Activated CD4-positive, alpha-beta memory T cell treated with anti-CD3 and anti-CD28 coated beads for 36 hours (primary cell): ENCODE measurements at regions of chr11 and their contacts with region 1.

Region 1: GRCh38 chr11:19076744-19077589 is 16.4 kb upstream of the MRGPRX2 start:
- DNase-seq: peak; percentile 78
- H3K4me3 Mint-ChIP-seq: no peak overlapping the region
- H3K27ac Mint-ChIP-seq: no peak overlapping the region
- H3K4me1 Mint-ChIP-seq: no peaks in the 10 kb centered on the region
- H3K27me3 Mint-ChIP-seq: peaks cover 5% of the 10 kb centered on the region

Region 2: GRCh38 chr11:18798799-18799469 is 278.0 kb before region 1 on chr11:
- CTCF ChIA-PET with region 1: no interaction called
- POLR2A ChIA-PET with region 1: no interaction called
- intact Hi-C with region 1: no loop called
- DNase-seq: no peak
- H3K4me3 Mint-ChIP-seq: no peak overlapping the region
- H3K27ac Mint-ChIP-seq: no peak overlapping the region
- H3K4me1 Mint-ChIP-seq: no peaks in the 10 kb centered on the region
- H3K27me3 Mint-ChIP-seq: peaks cover 9% of the 10 kb centered on the region

Region 3: DNA sequence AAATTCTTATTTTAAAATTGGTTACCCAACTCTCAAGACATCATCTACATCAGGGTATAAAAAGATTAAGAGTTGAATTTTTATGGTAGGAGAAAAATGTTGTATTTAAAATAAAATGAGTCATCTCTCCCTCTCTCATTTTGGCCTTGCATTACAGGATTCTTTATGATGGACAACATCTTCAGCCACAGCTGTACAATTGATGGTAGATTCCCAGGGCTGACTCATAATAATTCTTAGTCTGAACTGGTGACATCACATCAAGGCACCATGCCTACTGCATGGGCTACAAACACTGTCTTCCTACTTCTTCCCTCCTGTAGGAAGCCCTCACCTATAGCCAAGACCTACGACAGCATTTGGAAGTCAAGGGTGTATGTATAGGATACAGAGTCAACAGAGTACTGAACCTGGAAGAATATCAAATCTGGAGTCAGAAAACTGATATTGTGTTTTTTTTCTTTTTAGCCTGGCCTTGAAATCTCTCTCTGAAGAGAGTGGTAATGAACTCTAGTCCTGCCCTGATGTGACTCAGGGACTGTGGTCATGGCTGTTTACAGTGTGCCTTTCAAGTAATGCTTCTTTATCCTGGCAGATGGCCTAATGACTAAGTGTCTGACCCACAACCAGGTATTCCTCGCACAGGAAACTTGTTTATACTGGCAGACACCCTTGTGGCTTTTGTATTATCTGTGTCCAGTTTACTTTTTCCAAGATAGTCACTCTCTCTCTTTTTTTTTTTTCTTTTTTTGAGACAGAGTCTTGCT is 49.0 kb before region 1 on chr11:
- CTCF ChIA-PET with region 1: no interaction called
- POLR2A ChIA-PET with region 1: no interaction called
- intact Hi-C with region 1: no loop called
- DNase-seq: no peak
- H3K4me3 Mint-ChIP-seq: no peak overlapping the region
- H3K27ac Mint-ChIP-seq: no peak overlapping the region
- H3K4me1 Mint-ChIP-seq: peaks cover 2% of the 10 kb centered on the region
- H3K27me3 Mint-ChIP-seq: peaks cover 32% of the 10 kb centered on the region

Region 4: GRCh38 chr11:19060629-19061028 is 16.3 kb before region 1 on chr11 and contains the start of gene MRGPRX2:
- CTCF ChIA-PET with region 1: interaction called, 32 read pairs
- POLR2A ChIA-PET with region 1: interaction called, 3 read pairs
- intact Hi-C with region 1: no loop called
- DNase-seq: peak; percentile 61
- H3K4me3 Mint-ChIP-seq: no peak within 1 kb of the TSS
- H3K27ac Mint-ChIP-seq: peak within 1 kb of the TSS; percentile 24
- H3K4me1 Mint-ChIP-seq: peaks cover 21% of the 10 kb centered on the region
- H3K27me3 Mint-ChIP-seq: no peaks in the 10 kb centered on the region
- total RNA-seq, gene MRGPRX2: not detected

Region 5: DNA sequence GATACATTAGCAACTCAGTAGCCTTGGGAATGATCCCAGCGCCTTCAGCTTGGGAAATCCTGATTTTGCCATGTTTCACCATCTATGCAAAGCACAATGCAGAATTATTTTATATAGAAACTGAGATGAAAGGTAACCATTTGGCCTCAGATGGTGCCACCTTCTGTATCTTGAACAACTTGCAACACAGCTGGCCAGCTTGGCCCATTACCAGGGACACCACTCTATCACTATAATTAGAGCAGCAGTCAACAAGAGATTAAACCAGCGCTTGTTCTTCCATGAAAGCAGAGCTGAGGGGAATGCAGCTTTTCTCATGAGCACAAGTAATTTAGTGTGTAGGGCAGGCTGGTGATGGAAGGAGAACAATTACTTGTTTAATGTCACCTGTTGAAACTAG is 33.3 kb after region 1 on chr11:
- CTCF ChIA-PET with region 1: interaction called, 10 read pairs
- POLR2A ChIA-PET with region 1: interaction called, 3 read pairs
- intact Hi-C with region 1: no loop called
- DNase-seq: no peak
- H3K4me3 Mint-ChIP-seq: no peak overlapping the region
- H3K27ac Mint-ChIP-seq: no peak overlapping the region
- H3K4me1 Mint-ChIP-seq: no peaks in the 10 kb centered on the region
- H3K27me3 Mint-ChIP-seq: peaks cover 7% of the 10 kb centered on the region

Region 6: DNA sequence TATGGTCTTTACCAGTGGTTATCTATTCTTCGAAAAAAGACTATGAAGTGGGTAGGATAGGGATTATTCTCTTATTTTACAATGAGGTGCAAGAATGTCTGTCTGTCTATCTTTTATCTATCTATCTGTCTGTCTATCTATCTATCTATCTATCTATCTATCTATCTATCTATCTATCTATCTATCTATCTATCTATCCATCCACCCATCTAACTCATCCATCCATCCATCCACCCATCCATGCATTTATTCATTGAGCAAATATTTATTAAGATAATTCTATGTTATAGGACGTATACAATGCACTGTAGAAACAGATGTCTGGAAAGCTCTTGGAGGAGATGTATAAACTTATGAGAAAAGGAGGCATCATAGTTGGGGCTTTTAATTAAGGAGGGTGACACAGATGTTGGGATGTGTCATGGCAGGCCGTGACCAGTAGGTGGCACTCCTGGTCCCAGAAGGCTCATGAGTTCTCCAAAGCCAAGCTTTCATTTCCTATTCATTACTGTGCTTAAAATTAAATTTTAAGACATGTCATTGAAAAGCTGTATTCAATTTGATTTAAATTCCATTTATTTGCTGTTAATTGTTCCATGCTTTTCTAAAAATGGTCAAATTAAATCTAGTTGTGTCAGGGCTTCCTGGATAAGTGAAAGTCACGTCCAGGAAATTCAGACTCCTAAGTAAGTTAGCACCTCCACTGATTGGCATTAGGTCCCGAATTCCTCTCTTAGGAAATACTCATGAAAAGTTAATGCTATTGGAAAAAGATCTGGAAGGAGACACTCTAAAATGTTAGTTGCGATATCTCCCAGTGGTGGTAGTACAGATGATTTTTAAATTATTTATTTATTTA is 182.7 kb after region 1 on chr11:
- CTCF ChIA-PET with region 1: interaction called, 5 read pairs
- POLR2A ChIA-PET with region 1: no interaction called
- intact Hi-C with region 1: loop called (anchors 2 kb)
- DNase-seq: peak; percentile 76
- H3K4me3 Mint-ChIP-seq: no peak overlapping the region
- H3K27ac Mint-ChIP-seq: no peak overlapping the region
- H3K4me1 Mint-ChIP-seq: no peaks in the 10 kb centered on the region
- H3K27me3 Mint-ChIP-seq: no peaks in the 10 kb centered on the region